PC-3 (cell line): ENCODE measurements at regions of chr7 and their contacts with region 1.

Region 1: DNA sequence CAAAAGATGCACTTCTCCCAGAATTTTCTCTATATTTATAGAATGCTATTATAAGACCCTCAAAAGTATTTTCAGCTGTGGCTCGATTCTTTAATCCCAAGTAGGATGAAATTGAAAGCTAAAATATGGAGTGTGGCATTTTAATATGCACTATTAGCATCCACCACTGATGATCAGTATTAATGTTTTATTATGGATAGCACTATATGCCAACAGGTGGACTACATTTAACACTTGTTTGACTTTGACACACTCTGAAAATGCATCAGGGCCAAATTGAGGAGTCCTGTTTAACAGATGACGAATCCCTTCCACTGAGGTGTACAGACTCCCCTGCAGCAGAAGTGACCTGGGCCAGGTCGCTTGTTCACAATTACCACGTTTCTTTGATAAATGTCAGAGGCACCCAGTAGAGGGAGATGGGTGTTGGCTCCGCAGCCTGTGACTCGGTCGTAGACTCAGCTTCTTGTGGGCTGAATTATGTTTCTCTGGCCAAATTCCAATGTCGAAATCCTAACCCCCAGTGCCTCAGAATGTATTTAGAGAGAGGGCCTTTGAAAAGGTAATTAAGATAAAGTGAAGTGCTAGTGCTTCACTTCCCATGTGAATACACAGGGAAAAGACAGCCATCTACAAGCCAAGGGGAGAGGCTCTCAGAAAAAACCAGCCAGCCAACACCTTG is 48.1 kb downstream of the WIPF3 start:
- DNase-seq: peak; percentile 63
- ATAC-seq: peak; percentile 86
- H3K4me3 ChIP-seq: no peak overlapping the region
- H3K27ac ChIP-seq: no peak overlapping the region
- H3K4me1 ChIP-seq: peaks cover 8% of the 10 kb centered on the region; the same call in 1 of the 2 replicates
- H3K27me3 ChIP-seq: no peaks in the 10 kb centered on the region
- CTCF ChIP-seq: peak; percentile 40

Region 2: GRCh38 chr7:29764227-29764626 is 90.2 kb before region 1 on chr7:
- CTCF ChIA-PET with region 1: no interaction called
- POLR2A ChIA-PET with region 1: interaction called, 11 read pairs
- intact Hi-C with region 1: no loop called
- DNase-seq: peak; percentile 11
- ATAC-seq: peak; percentile 64
- H3K4me3 ChIP-seq: no peak overlapping the region
- H3K27ac ChIP-seq: no peak overlapping the region
- H3K4me1 ChIP-seq: no peaks in the 10 kb centered on the region
- H3K27me3 ChIP-seq: peaks cover 13% of the 10 kb centered on the region; the same call in 1 of the 2 replicates
- CTCF ChIP-seq: peak; percentile 32; the same call in 1 of the 2 replicates